Astrocyte of the cerebellum (primary cell): ENCODE measurements at regions of chr16 and their contacts with region 1.

Region 1: GRCh38 chr16:8660841-8661301 is 13.5 kb upstream of the ABAT start:
- DNase-seq: peak; percentile 13
- H3K4me3 ChIP-seq: no peak overlapping the region
- CTCF ChIP-seq: peak; percentile 60

Region 2: GRCh38 chr16:8696880-8697279 is 36.0 kb after region 1 on chr16:
- in situ Hi-C with region 1: no loop called
- DNase-seq: no peak
- H3K4me3 ChIP-seq: no peak overlapping the region
- CTCF ChIP-seq: no peak

Region 3: DNA sequence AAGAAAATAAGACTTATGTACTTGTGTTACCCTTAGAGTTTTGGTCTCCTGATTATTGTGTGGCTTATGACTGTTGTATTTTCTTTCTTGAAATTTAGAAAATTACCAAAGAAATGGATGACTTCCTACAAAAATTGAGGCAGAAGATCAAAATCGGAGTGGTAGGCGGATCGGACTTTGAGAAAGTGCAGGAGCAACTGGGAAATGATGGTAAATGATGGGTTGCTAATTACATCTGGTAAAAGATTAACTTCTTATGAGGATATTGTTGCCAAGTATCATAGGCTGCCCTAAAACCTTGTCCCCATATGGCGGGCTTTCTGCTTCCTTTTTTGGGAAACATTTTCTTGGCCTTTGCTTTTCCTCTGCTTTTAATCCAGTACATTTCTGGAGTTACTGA is 140.8 kb after region 1 on chr16:
- in situ Hi-C with region 1: loop called (anchors 5 kb)
- DNase-seq: no peak
- H3K4me3 ChIP-seq: no peak overlapping the region
- CTCF ChIP-seq: no peak